Activated CD4-positive, alpha-beta T cell treated with anti-CD3 and anti-CD28 coated beads for 36 hours (primary cell): ENCODE measurements at regions of chr4 and their contacts with region 1.

Region 1: DNA sequence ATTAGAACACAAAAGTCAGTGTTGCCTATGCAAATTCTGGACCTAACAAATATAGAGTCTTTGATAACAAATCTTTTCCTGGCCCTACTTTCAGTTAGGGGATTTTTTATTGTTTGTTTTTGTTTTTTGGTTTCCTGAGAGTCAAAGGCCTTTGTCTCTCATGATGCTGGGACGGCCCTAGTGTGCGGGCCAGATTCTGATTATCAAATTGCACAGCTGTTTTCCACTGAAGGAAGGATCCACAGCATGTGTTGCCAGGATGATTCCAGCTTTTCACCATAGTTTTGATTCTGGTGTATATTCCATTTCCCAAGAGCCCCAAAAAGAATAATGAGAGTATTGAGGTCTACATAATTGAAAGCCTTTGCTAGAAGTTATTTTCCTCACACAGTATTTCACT is 248.2 kb downstream of the CAMK2D start:
- DNase-seq: no peak
- ATAC-seq: no peak
- H3K4me3 Mint-ChIP-seq: no peak overlapping the region
- H3K27ac Mint-ChIP-seq: no peak overlapping the region
- H3K4me1 Mint-ChIP-seq: no peaks in the 10 kb centered on the region
- H3K27me3 Mint-ChIP-seq: no peaks in the 10 kb centered on the region

Region 2: DNA sequence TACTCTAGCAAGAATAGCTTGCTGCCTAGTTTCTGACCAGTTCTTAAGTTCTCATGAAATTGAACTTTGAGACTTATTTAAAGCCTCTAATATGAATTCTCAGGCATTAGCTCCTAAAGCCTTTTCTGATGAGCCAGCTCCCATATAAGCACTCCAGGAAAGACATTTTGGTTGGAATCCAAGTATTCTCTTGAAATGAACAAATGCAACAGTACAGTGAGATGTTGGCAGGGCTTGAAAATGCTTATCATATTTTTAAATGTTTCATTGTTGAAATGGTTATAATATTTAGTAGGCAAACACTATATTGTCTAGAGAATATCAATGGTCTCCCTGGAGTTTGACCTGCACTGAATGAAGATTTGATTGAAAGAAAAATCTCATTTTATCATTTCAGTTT is 223.6 kb before region 1 on chr4:
- CTCF ChIA-PET with region 1: no interaction called
- POLR2A ChIA-PET with region 1: no interaction called
- intact Hi-C with region 1: loop called in 1 of 2 experiments (anchors 10 kb)
- DNase-seq: no peak
- ATAC-seq: no peak
- H3K4me3 Mint-ChIP-seq: no peak overlapping the region
- H3K27ac Mint-ChIP-seq: no peak overlapping the region
- H3K4me1 Mint-ChIP-seq: no peaks in the 10 kb centered on the region
- H3K27me3 Mint-ChIP-seq: peaks cover 2% of the 10 kb centered on the region